Tibial artery (tissue), 4 donors: ENCODE measurements at regions of chr5 and their contacts with region 1.

Region 1: DNA sequence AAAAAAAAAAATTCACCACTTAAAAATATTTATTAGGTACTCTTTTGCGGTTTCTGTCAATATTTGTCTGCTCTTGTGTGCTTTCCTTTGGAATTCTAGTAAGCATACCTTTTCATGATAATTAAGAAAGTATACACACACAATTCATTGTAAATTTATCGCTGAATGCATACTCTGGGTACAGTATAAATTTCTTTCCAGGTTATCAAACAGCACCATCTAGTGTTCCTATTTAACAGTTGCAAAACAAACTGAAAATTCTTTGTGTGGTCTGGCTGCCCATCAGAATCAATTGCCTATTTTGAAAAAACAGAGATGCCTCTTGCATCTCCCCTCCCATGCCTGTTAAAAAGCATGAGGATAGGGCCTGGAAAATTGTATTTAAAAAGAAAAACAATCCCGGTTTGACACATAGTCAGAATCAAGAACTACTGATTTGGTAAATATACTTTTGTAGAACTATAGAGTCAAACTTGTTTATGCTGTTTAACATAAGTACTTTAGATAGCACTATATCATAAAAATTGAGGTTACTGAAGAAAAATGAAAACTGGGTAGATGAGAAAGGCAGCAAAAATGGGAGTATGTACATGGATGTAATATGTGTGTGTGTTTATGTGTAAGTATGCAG is 16.2 kb downstream of the PGGT1B start:
- DNase-seq: no peak
- H3K4me3 ChIP-seq: no peak overlapping the region
- H3K27ac ChIP-seq: no peak overlapping the region
- H3K4me1 ChIP-seq: peaks cover 0 to 21% (median 10%) of the 10 kb centered on the region in 4 donors
- H3K27me3 ChIP-seq: no peaks in the 10 kb centered on the region
- CTCF ChIP-seq: peak; percentile 71 to 74

Region 2: DNA sequence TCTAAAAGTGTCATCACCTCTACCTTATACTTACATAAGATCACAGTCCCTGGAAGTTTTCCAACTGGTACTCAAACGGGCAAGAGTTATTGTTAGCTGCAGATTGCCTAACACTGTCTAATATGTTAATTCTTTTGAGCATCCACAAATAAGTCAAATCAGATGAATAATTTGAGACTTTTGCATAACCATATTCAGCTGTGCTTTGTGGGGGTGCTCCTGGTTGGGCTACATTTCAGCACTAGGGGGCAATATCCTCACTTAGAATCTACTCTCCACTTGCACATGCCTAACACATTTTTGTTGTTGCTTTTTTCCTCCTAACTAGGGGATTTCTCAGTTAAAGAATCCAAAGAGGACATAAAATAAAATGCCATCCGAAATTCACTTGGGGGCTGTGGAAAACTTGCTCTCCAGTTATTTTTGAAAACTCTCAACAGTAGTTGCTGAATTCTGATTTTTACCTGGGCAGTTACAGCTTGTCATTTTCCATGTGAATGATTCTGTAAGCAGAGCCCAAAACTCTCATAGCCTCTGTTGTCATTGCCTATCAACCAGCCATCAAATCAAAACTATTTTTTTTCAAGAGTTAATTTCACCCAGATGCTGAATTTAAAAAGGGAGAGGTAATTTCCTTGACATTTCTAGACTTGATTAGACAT is 148.3 kb before region 1 on chr5:
- intact Hi-C with region 1: loop called (anchors 2 kb)
- DNase-seq: no peak
- H3K4me3 ChIP-seq: no peak overlapping the region
- H3K27ac ChIP-seq: no peak overlapping the region
- H3K4me1 ChIP-seq: no peaks in the 10 kb centered on the region
- H3K27me3 ChIP-seq: no peaks in the 10 kb centered on the region
- CTCF ChIP-seq: peak; percentile 69 to 73